Pancreas (tissue), 10 donors: ENCODE measurements at regions of chr14 and their contacts with region 1.

Region 1: GRCh38 chr14:75307700-75308379 is 29.2 kb downstream of the FOS start:
- DNase-seq: peak; percentile 77 to 96 (median 90)
- ATAC-seq: peak; percentile 62 to 79 (median 76)
- H3K4me3 ChIP-seq: no peak overlapping the region
- H3K27ac ChIP-seq: no peak overlapping the region
- H3K4me1 ChIP-seq: peaks cover 0 to 8% (median 0%) of the 10 kb centered on the region in 3 donors
- H3K27me3 ChIP-seq: no peaks in the 10 kb centered on the region
- CTCF ChIP-seq: peak; percentile 75 to 87 (median 82)

Region 2: DNA sequence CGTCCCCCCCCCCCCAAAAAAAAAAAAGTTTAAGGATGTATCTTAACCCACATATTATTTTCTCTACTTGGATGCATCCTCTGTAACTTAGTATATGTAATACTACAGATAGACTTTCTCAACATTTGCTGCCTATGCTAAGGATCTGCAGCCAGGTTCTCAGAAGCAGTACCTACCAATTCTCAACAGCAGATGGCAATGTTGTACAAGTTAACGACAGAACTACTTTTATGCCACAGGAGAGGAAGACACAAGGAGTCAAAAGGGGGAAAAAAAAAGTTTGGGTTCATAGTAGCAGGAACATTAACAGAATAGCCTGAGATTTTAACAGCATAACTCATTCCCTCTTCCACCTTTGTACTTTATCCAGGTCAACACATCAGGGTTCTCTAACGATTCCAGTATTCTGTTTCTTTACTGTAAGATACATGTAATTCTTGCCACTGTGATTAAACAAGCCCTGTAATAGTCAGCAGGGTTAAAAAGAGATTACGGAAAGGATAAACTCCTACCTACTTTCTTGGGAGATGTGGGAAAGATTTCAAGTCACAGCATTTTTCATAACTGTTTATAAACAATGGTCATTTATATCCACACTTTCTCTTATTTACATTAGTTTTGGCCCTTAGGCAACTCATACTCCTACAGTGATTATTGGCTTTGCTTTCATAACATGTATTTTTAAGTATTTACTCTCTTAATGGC is 175.3 kb before region 1 on chr14:
- intact Hi-C with region 1: loop called in 1 of 3 experiments (anchors 5 kb)
- DNase-seq: peak in 3 of 6 donors; percentile 29 to 68 (median 37)
- ATAC-seq: peak; percentile 63 to 89 (median 86)
- H3K4me3 ChIP-seq: no peak overlapping the region
- H3K27ac ChIP-seq: no peak overlapping the region
- H3K4me1 ChIP-seq: peaks cover 6 to 14% (median 7%) of the 10 kb centered on the region in 3 donors
- H3K27me3 ChIP-seq: no peaks in the 10 kb centered on the region
- CTCF ChIP-seq: peak; percentile 39 to 61 (median 49)

Region 3: GRCh38 chr14:75479770-75480600 is 172.1 kb after region 1 on chr14:
- intact Hi-C with region 1: loop called (anchors 5 to 10 kb)
- DNase-seq: no peak
- ATAC-seq: no peak
- H3K4me3 ChIP-seq: no peak overlapping the region
- H3K27ac ChIP-seq: no peak overlapping the region
- H3K4me1 ChIP-seq: no peaks in the 10 kb centered on the region
- H3K27me3 ChIP-seq: no peaks in the 10 kb centered on the region
- CTCF ChIP-seq: no peak

Region 4: DNA sequence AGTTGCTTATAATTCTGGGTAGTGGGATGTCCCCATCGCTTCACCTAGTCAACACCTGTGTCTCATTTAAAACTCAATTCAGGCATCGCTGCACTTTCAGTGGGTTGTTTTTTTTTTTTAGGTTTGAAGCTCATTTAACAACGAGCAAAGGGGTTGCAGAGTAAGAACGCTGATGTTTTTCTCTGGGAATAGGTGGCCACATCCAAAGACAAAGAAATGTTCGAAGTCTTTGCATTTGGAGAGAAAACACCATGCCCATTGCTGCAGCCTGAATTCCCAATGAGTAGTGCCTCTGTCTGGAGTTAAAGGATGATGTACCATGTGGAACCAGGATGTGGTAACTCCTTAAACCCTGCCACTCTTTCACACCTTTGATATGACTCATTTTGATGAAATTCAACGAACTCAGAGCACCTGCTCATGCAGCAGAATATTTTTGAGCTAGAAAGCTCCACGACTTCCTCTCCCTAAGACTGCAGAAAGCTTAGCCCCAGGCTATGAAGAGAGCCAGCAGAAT is 179.4 kb after region 1 on chr14:
- intact Hi-C with region 1: loop called (anchors 5 to 10 kb)
- DNase-seq: no peak
- ATAC-seq: no peak
- H3K4me3 ChIP-seq: no peak overlapping the region
- H3K27ac ChIP-seq: no peak overlapping the region
- H3K4me1 ChIP-seq: peaks cover 0 to 5% (median 0%) of the 10 kb centered on the region in 3 donors
- H3K27me3 ChIP-seq: no peaks in the 10 kb centered on the region
- CTCF ChIP-seq: no peak

Region 5: GRCh38 chr14:75560962-75561432 is 253.2 kb after region 1 on chr14:
- intact Hi-C with region 1: loop called in 1 of 3 experiments (anchors 5 kb)
- DNase-seq: peak; percentile 83 to 92 (median 86)
- ATAC-seq: peak; percentile 97 to 99 (median 98)
- H3K4me3 ChIP-seq: no peak overlapping the region
- H3K27ac ChIP-seq: no peak overlapping the region
- H3K4me1 ChIP-seq: peaks cover 0 to 3% (median 0%) of the 10 kb centered on the region in 3 donors
- H3K27me3 ChIP-seq: no peaks in the 10 kb centered on the region
- CTCF ChIP-seq: peak; percentile 73 to 87 (median 77)